Heart right ventricle (tissue), 16 donors: ENCODE measurements at regions of chr11 and their contacts with region 1.

Region 1: DNA sequence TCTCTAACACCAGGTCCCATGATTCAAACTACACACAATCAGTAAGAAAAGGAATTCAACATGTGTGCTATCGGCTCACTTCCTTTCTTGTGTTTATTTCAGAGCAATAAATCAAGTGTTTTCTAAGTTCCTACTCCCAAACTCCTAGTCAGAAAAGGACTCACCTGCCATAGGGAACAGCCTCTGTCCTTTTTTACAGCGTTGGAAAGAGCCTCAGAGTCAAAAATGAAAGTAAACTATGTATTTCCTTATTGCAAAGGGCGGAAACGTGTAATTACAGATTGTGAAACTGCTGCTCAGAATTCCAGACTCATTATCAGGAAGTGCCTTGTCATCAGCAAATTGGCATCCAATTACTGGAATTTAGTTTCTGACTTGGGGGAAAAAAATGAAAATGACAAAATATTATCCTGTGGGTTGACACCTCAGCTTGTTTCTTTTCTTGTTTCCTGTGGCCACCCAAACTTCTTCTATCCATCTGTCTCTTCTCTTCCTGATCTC is at the start of gene CASP4:
- DNase-seq: peak in 1 of 2 donors; percentile 49
- ATAC-seq: peak; percentile 71 to 96 (median 91)
- H3K4me3 ChIP-seq: peak within 1 kb of the TSS; percentile 26 to 63 (median 56)
- H3K27ac ChIP-seq: peak within 1 kb of the TSS; percentile 72 to 97 (median 89)
- H3K4me1 ChIP-seq: peaks cover 0 to 40% (median 22%) of the 10 kb centered on the region in 9 donors
- H3K27me3 ChIP-seq: no peaks in the 10 kb centered on the region
- CTCF ChIP-seq: no peak
- total RNA-seq, gene CASP4: 6.6 to 42.7 (median 11.8) TPM

Region 2: GRCh38 chr11:104892723-104893511 is 75.5 kb before region 1 on chr11:
- intact Hi-C with region 1: loop called in 1 of 10 experiments (anchors 5 kb)
- DNase-seq: no peak
- ATAC-seq: peak in 2 of 8 donors; percentile 11 to 28
- H3K4me3 ChIP-seq: no peak overlapping the region
- H3K27ac ChIP-seq: peak overlapping the region in 3 of 10 donors; percentile 24 to 33 (median 31)
- H3K4me1 ChIP-seq: peaks cover 0 to 34% (median 6%) of the 10 kb centered on the region in 9 donors
- H3K27me3 ChIP-seq: no peaks in the 10 kb centered on the region
- CTCF ChIP-seq: no peak

Region 3: GRCh38 chr11:105034813-105035620 is 66.6 kb after region 1 on chr11 and contains the start of gene CASP1:
- intact Hi-C with region 1: loop called in 2 of 10 experiments (anchors 5 to 10 kb)
- DNase-seq: peak in 1 of 2 donors; percentile 49
- ATAC-seq: peak in 7 of 8 donors; percentile 71 to 95 (median 89)
- H3K4me3 ChIP-seq: peak within 1 kb of the TSS; percentile 19 to 62 (median 50)
- H3K27ac ChIP-seq: peak within 1 kb of the TSS; percentile 34 to 89 (median 66)
- H3K4me1 ChIP-seq: peaks cover 0 to 50% (median 6%) of the 10 kb centered on the region in 9 donors
- H3K27me3 ChIP-seq: no peaks in the 10 kb centered on the region
- CTCF ChIP-seq: no peak
- total RNA-seq, gene CASP1: 4.3 to 35.5 (median 7.5) TPM